Ascending aorta (tissue), 2 donors: ENCODE measurements at regions of chr6 and their contacts with region 1.

Region 1: GRCh38 chr6:89145787-89146646 is at the start of gene PM20D2:
- DNase-seq: peak in 1 of 2 donors; percentile 82
- H3K4me3 ChIP-seq: peak within 1 kb of the TSS; percentile 86 to 97
- H3K27ac ChIP-seq: peak within 1 kb of the TSS; percentile 92 to 98
- H3K4me1 ChIP-seq: peaks cover 0 to 11% of the 10 kb centered on the region in 2 donors
- H3K27me3 ChIP-seq: no peaks in the 10 kb centered on the region
- CTCF ChIP-seq: no peak
- total RNA-seq, gene PM20D2: 8.8 TPM

Region 2: GRCh38 chr6:89221971-89222711 is 76.1 kb after region 1 on chr6:
- intact Hi-C with region 1: loop called (anchors 5 kb)
- DNase-seq: no peak
- H3K4me3 ChIP-seq: peak overlapping the region; percentile 25 to 32
- H3K27ac ChIP-seq: peak overlapping the region; percentile 67 to 80
- H3K4me1 ChIP-seq: peaks cover 0 to 16% of the 10 kb centered on the region in 2 donors
- H3K27me3 ChIP-seq: no peaks in the 10 kb centered on the region
- CTCF ChIP-seq: no peak

Region 3: GRCh38 chr6:89385156-89385667 is 239.2 kb after region 1 on chr6:
- intact Hi-C with region 1: no loop called
- DNase-seq: no peak
- H3K4me3 ChIP-seq: no peak overlapping the region
- H3K27ac ChIP-seq: no peak overlapping the region
- H3K4me1 ChIP-seq: no peaks in the 10 kb centered on the region
- H3K27me3 ChIP-seq: no peaks in the 10 kb centered on the region
- CTCF ChIP-seq: no peak